ENCODE measurements at regions of chr11 and their contacts with region 1.

Region 1: DNA sequence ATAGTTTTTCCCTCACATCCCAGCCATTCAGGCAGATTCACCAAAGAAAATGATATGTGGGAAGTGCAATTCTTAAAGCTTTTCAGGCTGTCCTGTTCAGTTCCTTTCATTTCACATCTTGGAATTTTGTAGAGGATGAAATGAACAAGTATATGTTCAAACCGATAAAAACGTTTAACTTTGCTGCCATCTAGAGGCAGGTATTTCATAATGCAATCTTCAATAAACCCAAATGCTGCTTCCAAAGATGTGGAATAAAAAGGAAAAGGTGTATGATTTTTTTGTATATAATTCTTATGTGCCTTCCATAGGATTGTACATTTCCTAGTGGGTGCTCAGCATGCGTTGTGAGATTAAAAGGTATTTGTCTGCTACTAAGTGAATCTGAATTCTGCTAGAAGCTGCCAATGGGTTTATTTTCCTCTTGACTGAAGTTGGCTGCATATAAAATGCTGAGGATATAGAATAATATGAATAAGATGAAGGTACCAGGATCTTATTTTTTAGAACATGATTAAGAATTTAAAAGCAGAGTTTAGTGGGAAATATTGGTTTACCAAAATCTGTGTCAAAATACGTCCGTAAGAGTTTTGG is 199.3 kb downstream of the PGR start:
- DNase-seq: peak; percentile 89
- ATAC-seq: peak; percentile 35
- H3K4me3 ChIP-seq: peak overlapping the region; percentile 0; the same call in 1 of the 2 replicates
- H3K27ac ChIP-seq: peak overlapping the region; percentile 55; the same call in 1 of the 2 replicates
- H3K4me1 ChIP-seq: peaks cover 31% of the 10 kb centered on the region
- H3K27me3 ChIP-seq: no peaks in the 10 kb centered on the region
- CTCF ChIP-seq: peak; percentile 92

Region 2: DNA sequence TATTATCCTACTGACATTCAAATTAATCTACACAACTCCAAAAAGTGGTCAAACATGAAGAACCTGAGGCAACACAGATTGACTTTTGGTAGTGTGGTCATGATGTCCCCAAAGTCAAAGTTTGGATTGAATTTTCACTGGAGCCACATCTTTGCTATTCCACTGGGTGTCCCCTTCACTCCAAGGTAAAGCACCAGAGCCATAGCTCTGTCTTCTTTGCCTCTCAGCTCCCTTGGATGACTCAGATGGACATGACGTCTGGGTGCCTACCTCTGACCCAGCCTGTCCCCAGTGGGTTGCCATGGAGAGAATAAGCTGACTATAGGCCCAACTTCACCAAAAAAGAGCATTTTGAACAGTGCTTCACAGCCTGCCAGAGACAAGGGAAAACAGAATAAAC is 300.6 kb before region 1 on chr11:
- CTCF ChIA-PET with region 1: no interaction called
- POLR2A ChIA-PET with region 1: no interaction called
- intact Hi-C with region 1: no loop called
- DNase-seq: peak; percentile 55
- ATAC-seq: peak; percentile 71; the same call in 1 of the 2 replicates
- H3K4me3 ChIP-seq: no peak overlapping the region
- H3K27ac ChIP-seq: no peak overlapping the region
- H3K4me1 ChIP-seq: no peaks in the 10 kb centered on the region; the same call in 1 of the 2 replicates
- H3K27me3 ChIP-seq: no peaks in the 10 kb centered on the region
- CTCF ChIP-seq: peak; percentile 56

Region 3: DNA sequence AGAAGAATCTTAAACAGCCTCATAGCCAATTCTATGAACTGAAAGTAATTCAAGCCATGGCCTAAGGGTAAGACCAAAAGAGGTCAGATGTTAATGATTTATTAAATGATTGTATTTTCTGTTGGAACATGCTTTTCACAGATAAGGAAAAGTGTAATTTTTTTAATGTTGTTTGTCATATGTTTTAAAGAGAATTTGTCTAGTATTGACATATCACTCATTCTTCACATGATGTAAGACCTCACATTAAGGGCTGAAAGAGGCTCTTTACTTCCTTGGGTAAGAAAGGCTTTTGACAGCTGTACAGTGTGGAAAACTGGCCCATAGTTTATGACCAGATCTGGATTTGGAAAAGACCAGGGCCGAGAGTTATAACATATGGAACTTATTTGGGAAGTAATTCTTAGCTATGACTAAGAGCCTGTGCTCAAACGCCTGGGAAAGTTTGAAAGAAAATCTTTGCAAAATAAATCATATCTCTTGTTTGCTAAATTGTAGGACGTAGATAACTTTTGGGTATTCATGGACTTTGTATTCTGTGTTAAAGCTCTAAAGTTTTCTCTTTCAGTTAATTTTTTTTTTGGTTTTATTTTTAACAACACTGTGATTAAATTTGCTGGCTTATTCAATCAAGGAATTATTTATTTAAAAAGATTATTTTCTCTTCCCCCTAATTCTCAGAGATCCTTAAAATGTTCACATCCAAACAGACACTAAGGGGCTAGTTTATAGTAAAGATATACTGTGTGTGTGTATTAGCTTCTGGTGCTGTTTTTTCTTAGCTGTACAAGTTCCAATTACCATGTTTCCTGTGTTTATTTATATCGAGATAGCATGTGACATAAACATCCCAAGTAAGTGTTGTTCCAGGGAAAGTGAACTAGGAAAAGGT is 81.0 kb before region 1 on chr11:
- CTCF ChIA-PET with region 1: no interaction called
- POLR2A ChIA-PET with region 1: no interaction called
- intact Hi-C with region 1: no loop called
- DNase-seq: no peak
- ATAC-seq: no peak
- H3K4me3 ChIP-seq: no peak overlapping the region
- H3K27ac ChIP-seq: no peak overlapping the region
- H3K4me1 ChIP-seq: peaks cover 15% of the 10 kb centered on the region
- H3K27me3 ChIP-seq: no peaks in the 10 kb centered on the region
- CTCF ChIP-seq: no peak

Region 4: GRCh38 chr11:100865443-100866065 is 64.7 kb before region 1 on chr11:
- CTCF ChIA-PET with region 1: no interaction called
- POLR2A ChIA-PET with region 1: no interaction called
- intact Hi-C with region 1: loop called (anchors 2 kb)
- DNase-seq: peak; percentile 62
- ATAC-seq: peak; percentile 91
- H3K4me3 ChIP-seq: no peak overlapping the region
- H3K27ac ChIP-seq: peak overlapping the region; percentile 19; the same call in 1 of the 2 replicates
- H3K4me1 ChIP-seq: peaks cover 48% of the 10 kb centered on the region
- H3K27me3 ChIP-seq: no peaks in the 10 kb centered on the region
- CTCF ChIP-seq: no peak